Breast epithelium (tissue), 4 donors: ENCODE measurements at regions of chr6 and their contacts with region 1.

Region 1: DNA sequence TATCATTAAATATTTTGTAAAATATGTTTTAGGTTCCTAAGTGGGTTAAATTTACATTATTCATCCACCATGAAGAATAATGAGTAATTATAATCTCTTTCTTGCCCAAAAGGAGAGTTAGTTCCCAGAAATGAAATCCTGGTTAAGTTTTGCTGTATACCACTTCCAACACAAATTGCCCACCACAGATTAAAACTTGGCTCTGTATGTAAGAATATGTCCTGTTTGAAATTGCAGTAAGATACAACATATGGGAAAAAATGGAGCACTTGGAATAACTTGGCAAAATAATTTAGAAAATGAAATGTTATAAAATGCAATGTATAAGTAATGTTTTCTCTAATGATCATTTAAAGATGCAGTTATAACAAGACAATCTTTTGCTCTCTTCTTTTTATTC is 64.3 kb upstream of the GJE1 start:
- DNase-seq: no peak
- H3K4me3 ChIP-seq: no peak overlapping the region
- H3K27ac ChIP-seq: no peak overlapping the region
- H3K4me1 ChIP-seq: no peaks in the 10 kb centered on the region
- H3K27me3 ChIP-seq: no peaks in the 10 kb centered on the region
- CTCF ChIP-seq: no peak
- POLR2A ChIP-seq: no peak

Region 2: DNA sequence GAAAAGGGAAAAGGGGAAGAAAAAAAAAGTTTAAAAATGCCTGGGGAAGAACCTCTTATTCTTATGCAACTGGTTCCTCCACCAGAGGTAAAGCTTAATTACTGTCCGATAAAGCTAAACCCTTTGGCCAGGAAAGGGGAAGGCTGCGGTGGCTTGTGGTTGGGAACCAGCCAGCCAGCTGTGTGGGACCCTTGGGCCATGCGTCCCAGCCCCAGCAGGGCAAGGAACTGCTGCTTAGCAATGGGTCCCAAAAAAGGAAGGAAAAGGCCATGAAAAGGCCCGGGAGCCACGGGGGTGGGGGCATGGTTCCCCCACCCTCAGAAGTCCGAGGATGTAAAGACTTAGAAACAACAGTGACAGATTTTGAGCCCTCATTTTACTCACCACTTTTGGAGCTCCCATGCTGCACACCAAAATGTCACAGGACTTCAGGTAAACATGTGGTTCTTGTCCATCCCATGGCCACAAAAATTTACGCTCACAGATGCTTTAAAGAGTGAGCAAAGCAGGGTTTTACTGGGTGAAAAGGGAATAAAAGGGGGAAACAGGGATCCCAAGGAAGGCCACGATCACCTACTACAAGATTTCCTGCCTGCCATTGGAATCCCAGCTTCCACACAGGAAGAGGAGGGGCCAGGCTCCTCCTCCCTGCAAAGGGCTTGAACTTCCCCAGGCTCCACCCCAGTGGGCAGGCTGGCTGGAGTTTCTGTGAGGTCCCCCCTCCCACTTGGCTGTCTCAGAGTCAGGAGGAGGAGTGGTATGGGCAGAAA is 1170.4 kb before region 1 on chr6:
- intact Hi-C with region 1: loop called (anchors 10 kb)
- DNase-seq: no peak
- H3K4me3 ChIP-seq: peak overlapping the region in 1 of 3 donors; percentile 33
- H3K27ac ChIP-seq: no peak overlapping the region
- H3K4me1 ChIP-seq: no peaks in the 10 kb centered on the region
- H3K27me3 ChIP-seq: no peaks in the 10 kb centered on the region
- CTCF ChIP-seq: no peak
- POLR2A ChIP-seq: no peak

Region 3: DNA sequence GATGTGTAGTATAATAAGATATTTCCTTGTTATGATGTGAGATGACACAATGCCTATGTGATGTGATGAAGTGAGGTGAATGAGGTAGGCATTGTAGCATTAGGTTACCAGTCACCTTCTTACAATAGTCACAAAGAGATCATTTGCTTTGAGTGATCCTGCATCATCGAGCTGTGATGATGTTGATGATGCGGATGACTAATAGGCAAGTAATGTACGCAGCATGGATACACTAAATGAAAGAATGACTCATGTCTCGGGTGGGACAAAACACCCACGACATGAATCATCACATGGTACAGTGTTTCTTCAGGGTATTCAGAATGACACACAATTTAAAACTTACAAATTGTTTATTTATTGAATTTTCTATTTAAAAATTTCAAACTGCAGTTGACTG is 742.0 kb before region 1 on chr6:
- intact Hi-C with region 1: no loop called
- DNase-seq: no peak
- H3K4me3 ChIP-seq: peak overlapping the region in 2 of 3 donors; percentile 13 to 49
- H3K27ac ChIP-seq: no peak overlapping the region
- H3K4me1 ChIP-seq: no peaks in the 10 kb centered on the region
- H3K27me3 ChIP-seq: no peaks in the 10 kb centered on the region
- CTCF ChIP-seq: no peak
- POLR2A ChIP-seq: no peak